Activated B cell treated with CpG ODN at 0.5 μM for 24 hours (primary cell): ENCODE measurements at regions of chr19 and their contacts with region 1.

Region 1: GRCh38 chr19:14383661-14384555 is 2.7 kb downstream of the ADGRE5 start:
- DNase-seq: peak; percentile 55
- ATAC-seq: peak; percentile 25
- H3K4me3 Mint-ChIP-seq: peak overlapping the region; percentile 93
- H3K27ac Mint-ChIP-seq: peak overlapping the region; percentile 93
- H3K4me1 Mint-ChIP-seq: peaks cover 54% of the 10 kb centered on the region
- H3K27me3 Mint-ChIP-seq: no peaks in the 10 kb centered on the region
- CTCF ChIP-seq: no peak

Region 2: GRCh38 chr19:13181747-13182388 is 1202.0 kb before region 1 on chr19:
- CTCF ChIA-PET with region 1: no interaction called
- POLR2A ChIA-PET with region 1: interaction called, 10 read pairs
- intact Hi-C with region 1: no loop called
- DNase-seq: no peak
- ATAC-seq: peak; percentile 66
- H3K4me3 Mint-ChIP-seq: peak overlapping the region; percentile 49
- H3K27ac Mint-ChIP-seq: peak overlapping the region; percentile 46
- H3K4me1 Mint-ChIP-seq: peaks cover 33% of the 10 kb centered on the region
- H3K27me3 Mint-ChIP-seq: no peaks in the 10 kb centered on the region
- CTCF ChIP-seq: no peak

Region 3: GRCh38 chr19:14325134-14325533 is 58.8 kb before region 1 on chr19:
- CTCF ChIA-PET with region 1: no interaction called
- POLR2A ChIA-PET with region 1: no interaction called
- intact Hi-C with region 1: no loop called
- DNase-seq: no peak
- ATAC-seq: no peak
- H3K4me3 Mint-ChIP-seq: no peak overlapping the region
- H3K27ac Mint-ChIP-seq: no peak overlapping the region
- H3K4me1 Mint-ChIP-seq: no peaks in the 10 kb centered on the region
- H3K27me3 Mint-ChIP-seq: no peaks in the 10 kb centered on the region
- CTCF ChIP-seq: no peak

Region 4: DNA sequence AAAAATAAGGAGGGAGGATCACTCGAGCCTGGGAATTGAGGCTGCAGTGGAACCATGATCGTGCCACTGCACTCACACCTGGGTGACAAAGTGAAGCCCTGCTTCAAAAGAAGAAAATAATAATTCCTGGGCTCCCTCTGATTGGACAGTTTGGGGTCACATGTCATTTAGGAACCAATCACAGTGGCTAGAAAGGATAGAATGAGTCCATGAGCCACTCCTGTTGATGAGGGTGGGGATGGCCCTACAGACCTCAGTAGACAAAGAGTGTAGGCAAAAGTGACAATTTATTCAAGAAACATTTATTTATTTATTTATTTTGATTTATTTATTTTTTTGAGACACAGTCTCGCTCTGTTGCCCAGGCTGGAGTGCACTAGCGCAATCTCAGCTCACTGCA is 29.5 kb before region 1 on chr19:
- CTCF ChIA-PET with region 1: interaction called, 3 read pairs
- POLR2A ChIA-PET with region 1: interaction called, 342 read pairs
- intact Hi-C with region 1: no loop called
- DNase-seq: no peak
- ATAC-seq: no peak
- H3K4me3 Mint-ChIP-seq: no peak overlapping the region
- H3K27ac Mint-ChIP-seq: no peak overlapping the region
- H3K4me1 Mint-ChIP-seq: peaks cover 34% of the 10 kb centered on the region
- H3K27me3 Mint-ChIP-seq: no peaks in the 10 kb centered on the region
- CTCF ChIP-seq: no peak

Region 5: DNA sequence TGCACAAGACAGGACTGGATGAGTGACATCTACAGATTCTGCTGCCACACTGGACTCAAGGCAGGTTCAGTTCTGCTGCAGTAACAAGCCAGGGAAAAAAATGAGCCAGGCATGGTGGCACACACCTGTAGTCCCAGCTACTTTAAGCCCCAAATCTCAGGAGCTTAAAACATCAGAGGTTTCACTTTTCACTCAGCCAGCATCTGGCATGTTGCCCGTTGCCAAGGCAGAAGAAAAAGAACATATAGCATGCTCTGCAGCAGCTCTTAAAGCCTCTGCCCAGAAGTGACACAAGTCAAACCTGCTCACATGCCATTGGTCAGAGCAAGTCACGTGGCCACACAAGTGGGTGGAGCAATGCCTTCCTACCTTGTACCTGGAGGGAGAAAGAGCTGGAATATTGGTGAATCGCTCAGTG is 17.4 kb before region 1 on chr19:
- CTCF ChIA-PET with region 1: interaction called, 33 read pairs
- POLR2A ChIA-PET with region 1: interaction called, 342 read pairs
- intact Hi-C with region 1: loop called (anchors 1 kb)
- DNase-seq: peak; percentile 63
- ATAC-seq: peak; percentile 38
- H3K4me3 Mint-ChIP-seq: peak overlapping the region; percentile 22
- H3K27ac Mint-ChIP-seq: peak overlapping the region; percentile 93
- H3K4me1 Mint-ChIP-seq: peaks cover 77% of the 10 kb centered on the region
- H3K27me3 Mint-ChIP-seq: no peaks in the 10 kb centered on the region
- CTCF ChIP-seq: no peak

Region 6: GRCh38 chr19:14400951-14401431 is 17.1 kb after region 1 on chr19:
- CTCF ChIA-PET with region 1: interaction called, 8 read pairs
- POLR2A ChIA-PET with region 1: interaction called, 56 read pairs
- intact Hi-C with region 1: loop called (anchors 1 kb)
- DNase-seq: no peak
- ATAC-seq: peak; percentile 67
- H3K4me3 Mint-ChIP-seq: peak overlapping the region; percentile 19
- H3K27ac Mint-ChIP-seq: peak overlapping the region; percentile 85
- H3K4me1 Mint-ChIP-seq: peaks cover 20% of the 10 kb centered on the region
- H3K27me3 Mint-ChIP-seq: no peaks in the 10 kb centered on the region
- CTCF ChIP-seq: no peak

Region 7: DNA sequence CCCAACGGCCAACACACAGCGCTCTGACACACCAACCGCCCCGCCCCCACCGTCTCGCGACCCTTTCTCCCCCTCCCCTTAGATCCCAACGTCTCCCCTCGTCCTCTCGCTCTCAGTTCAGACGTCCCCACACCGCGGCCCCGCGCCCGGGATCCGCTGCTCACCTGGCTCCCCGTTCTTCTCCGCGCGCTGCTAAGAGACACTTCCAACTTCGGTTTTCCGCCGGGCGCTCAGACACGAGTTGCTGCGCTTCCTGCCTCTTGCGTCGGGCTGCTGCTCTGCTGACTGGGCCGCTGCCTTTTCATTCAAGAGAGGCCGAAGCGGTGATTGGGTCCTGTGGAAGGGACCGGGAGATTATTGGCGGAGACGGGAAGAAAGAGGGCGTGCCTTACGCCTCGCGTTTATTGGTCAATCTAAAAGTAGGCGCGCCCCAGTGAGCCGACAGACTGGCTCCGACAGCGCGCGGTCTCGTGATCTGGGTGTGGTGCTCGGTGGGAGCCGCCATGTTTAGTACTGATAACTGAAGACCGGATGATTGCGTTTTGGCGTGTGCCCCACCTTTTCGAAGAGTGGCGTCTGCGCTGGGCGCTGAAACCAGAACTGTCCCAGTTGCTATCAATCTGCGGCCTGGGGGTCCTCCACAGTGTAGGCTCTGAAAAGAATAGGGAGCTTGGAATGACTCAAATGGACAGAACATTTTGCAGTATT is 35.4 kb after region 1 on chr19 and contains the start of gene DDX39A:
- CTCF ChIA-PET with region 1: interaction called, 3 read pairs
- POLR2A ChIA-PET with region 1: interaction called, 4 read pairs
- intact Hi-C with region 1: loop called (anchors 1 kb)
- DNase-seq: peak; percentile 83
- ATAC-seq: peak; percentile 91
- H3K4me3 Mint-ChIP-seq: peak within 1 kb of the TSS; percentile 99
- H3K27ac Mint-ChIP-seq: peak within 1 kb of the TSS; percentile 99
- H3K4me1 Mint-ChIP-seq: peaks cover 44% of the 10 kb centered on the region
- H3K27me3 Mint-ChIP-seq: no peaks in the 10 kb centered on the region
- CTCF ChIP-seq: no peak
- total RNA-seq, gene DDX39A: 210 and 211 TPM in 2 replicates

Region 8: GRCh38 chr19:14440049-14440448 is 56.1 kb after region 1 on chr19:
- CTCF ChIA-PET with region 1: no interaction called
- POLR2A ChIA-PET with region 1: interaction called, 12 read pairs
- intact Hi-C with region 1: no loop called
- DNase-seq: peak; percentile 77
- ATAC-seq: peak; percentile 99
- H3K4me3 Mint-ChIP-seq: peak overlapping the region; percentile 87
- H3K27ac Mint-ChIP-seq: peak overlapping the region; percentile 88
- H3K4me1 Mint-ChIP-seq: peaks cover 36% of the 10 kb centered on the region
- H3K27me3 Mint-ChIP-seq: no peaks in the 10 kb centered on the region
- CTCF ChIP-seq: no peak